ENCODE measurements at regions of chr3 and their contacts with region 1.

Region 1: DNA sequence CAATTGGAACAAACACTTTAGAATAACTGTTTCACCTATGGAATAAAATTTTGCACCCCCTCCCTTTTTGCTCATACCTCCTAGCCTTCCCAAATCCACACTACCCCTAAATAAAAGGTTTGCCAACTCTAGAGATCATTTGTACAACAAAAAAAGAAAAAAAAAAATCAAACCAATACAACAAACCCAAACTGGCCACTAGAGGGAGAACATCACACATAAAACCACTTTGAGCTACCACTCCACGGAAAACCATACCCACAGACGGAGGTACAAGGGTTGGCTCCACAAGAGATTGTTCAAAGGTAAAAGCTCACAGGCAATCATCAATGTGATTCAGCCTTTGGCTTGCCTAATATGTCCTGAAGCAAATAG is 47.6 kb downstream of the SETMAR start:
- DNase-seq: peak; percentile 47
- H3K4me3 ChIP-seq: no peak overlapping the region
- H3K27ac ChIP-seq: no peak overlapping the region
- H3K27me3 ChIP-seq: no peaks in the 10 kb centered on the region
- CTCF ChIP-seq: peak; percentile 81

Region 2: GRCh38 chr3:4309491-4310128 is 41.2 kb before region 1 on chr3:
- CTCF ChIA-PET with region 1: interaction called, 10 read pairs
- POLR2A ChIA-PET with region 1: no interaction called
- DNase-seq: no peak
- H3K4me3 ChIP-seq: no peak overlapping the region
- H3K27ac ChIP-seq: no peak overlapping the region
- H3K27me3 ChIP-seq: no peaks in the 10 kb centered on the region
- CTCF ChIP-seq: no peak

Region 3: DNA sequence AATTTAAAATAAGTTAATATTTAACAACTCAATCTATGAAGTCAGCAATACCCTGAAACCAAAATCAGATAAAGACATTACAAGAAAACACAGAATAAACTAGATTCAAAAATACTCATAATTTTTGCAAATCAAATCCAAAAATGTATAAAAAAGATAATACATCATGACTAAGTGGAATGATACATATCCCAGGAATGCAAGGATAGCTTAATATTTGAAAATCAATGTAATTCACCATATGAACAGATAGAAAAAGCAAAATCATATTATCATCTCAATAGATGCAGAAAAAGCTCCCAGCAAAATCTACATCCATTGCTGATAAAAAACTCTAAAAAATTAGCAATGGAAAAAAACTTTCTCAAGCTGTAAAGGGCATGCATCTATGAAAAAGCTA is 22.9 kb after region 1 on chr3:
- CTCF ChIA-PET with region 1: interaction called, 12 read pairs
- POLR2A ChIA-PET with region 1: no interaction called
- DNase-seq: no peak
- H3K4me3 ChIP-seq: no peak overlapping the region
- H3K27ac ChIP-seq: no peak overlapping the region
- H3K27me3 ChIP-seq: no peaks in the 10 kb centered on the region
- CTCF ChIP-seq: no peak

Region 4: GRCh38 chr3:4493014-4493940 is 142.5 kb after region 1 on chr3 and contains the start of gene ITPR1:
- CTCF ChIA-PET with region 1: interaction called, 30 read pairs
- POLR2A ChIA-PET with region 1: interaction called, 18 read pairs
- DNase-seq: peak; percentile 99
- H3K4me3 ChIP-seq: peak within 1 kb of the TSS; percentile 83
- H3K27ac ChIP-seq: peak within 1 kb of the TSS; percentile 11
- H3K27me3 ChIP-seq: peaks cover 9% of the 10 kb centered on the region
- CTCF ChIP-seq: no peak
- polyA plus RNA-seq, gene ITPR1: 6.7 and 7.4 TPM in 2 replicates

Region 5: DNA sequence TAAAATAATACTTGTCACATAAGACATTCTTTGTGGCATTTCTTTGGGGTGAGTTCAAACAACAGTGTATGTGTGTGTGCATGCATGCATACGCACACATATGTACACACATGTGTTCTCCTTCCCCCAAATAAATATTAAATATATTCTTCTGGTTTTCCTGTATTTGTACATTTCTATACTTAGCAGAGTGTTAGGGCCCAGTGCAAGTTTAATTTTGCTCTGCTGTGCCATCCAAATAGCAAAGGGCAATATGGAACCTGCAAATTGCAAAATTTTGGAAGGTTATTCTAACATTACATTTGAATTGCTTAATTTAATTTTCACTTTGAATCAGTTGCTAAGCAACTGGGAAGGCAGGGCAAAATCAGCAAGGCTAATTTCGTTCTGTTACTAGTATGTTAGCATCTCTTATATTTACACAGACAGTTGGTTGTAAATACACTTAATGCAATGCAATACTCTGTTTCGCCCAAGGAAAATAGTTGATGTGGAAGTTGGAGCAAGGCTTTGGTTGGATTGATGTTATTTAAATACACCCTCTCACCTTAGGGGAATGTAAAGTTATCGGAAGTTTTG is 272.7 kb after region 1 on chr3:
- CTCF ChIA-PET with region 1: interaction called, 33 read pairs
- POLR2A ChIA-PET with region 1: no interaction called
- DNase-seq: no peak
- H3K4me3 ChIP-seq: no peak overlapping the region
- H3K27ac ChIP-seq: no peak overlapping the region
- H3K27me3 ChIP-seq: no peaks in the 10 kb centered on the region
- CTCF ChIP-seq: no peak

Measured in AG04450 (cell line).